ENCODE measurements at regions of chr11 and their contacts with region 1.

Region 1: DNA sequence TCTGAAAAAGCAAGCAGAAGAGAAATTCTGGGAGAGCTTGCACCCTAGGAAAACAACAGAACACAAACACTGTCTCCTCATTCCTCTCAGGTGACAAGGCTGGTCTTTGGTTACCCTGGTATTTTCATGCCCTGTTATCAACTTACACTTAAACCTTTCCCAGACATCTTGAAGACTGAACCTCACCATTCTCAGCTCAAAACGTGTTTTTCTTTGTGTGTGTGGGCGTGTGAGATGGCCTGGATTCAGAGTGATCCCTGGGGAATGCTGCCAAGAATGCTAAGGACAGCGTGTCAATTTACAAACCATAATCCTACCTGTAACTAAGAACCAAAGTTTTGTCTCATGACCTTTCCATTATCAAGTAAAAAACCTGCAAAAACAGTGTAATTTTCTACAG is 33.3 kb downstream of the ELF5 start:
- DNase-seq: no peak
- ATAC-seq: no peak
- H3K4me3 ChIP-seq: no peak overlapping the region
- H3K27ac ChIP-seq: no peak overlapping the region
- H3K4me1 ChIP-seq: peaks cover 9 to 10% of the 10 kb centered on the region in 2 donors
- H3K27me3 ChIP-seq: no peaks in the 10 kb centered on the region
- CTCF ChIP-seq: no peak
- POLR2A ChIP-seq: no peak

Region 2: DNA sequence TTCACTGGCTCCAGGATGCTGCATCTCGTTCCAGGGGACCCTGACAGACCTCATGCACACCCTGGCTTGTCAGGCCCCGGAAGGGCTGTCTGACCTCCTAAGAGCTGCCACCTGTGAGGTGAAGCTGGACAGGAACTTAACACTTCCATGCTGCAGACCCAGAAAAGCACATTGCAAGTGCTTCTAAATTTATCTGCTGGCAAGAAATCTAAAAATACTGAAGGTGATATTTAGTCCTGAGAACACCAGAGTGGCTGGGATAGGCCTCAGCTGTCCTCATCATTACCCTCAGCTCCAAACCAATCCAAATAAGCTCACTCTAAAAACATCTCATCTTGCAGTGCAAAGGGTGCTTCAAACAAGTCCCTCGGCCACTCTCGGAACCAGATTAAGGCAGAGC is 169.2 kb before region 1 on chr11:
- in situ Hi-C with region 1: no loop called
- intact Hi-C with region 1: loop called (anchors 2 kb)
- DNase-seq: peak; percentile 26 to 74
- ATAC-seq: peak; percentile 88 to 89
- H3K4me3 ChIP-seq: no peak overlapping the region
- H3K27ac ChIP-seq: peak overlapping the region; percentile 80 to 88 (median 84)
- H3K4me1 ChIP-seq: peaks cover 50 to 69% of the 10 kb centered on the region in 2 donors
- H3K27me3 ChIP-seq: no peaks in the 10 kb centered on the region
- CTCF ChIP-seq: no peak
- POLR2A ChIP-seq: peak in 1 of 2 donors; percentile 54

Region 3: GRCh38 chr11:34379079-34379478 is 101.2 kb before region 1 on chr11:
- in situ Hi-C with region 1: loop called in 1 of 4 experiments (anchors 10 kb)
- intact Hi-C with region 1: no loop called
- DNase-seq: no peak
- ATAC-seq: no peak
- H3K4me3 ChIP-seq: no peak overlapping the region
- H3K27ac ChIP-seq: no peak overlapping the region
- H3K4me1 ChIP-seq: no peaks in the 10 kb centered on the region
- H3K27me3 ChIP-seq: no peaks in the 10 kb centered on the region
- CTCF ChIP-seq: no peak
- POLR2A ChIP-seq: no peak

Region 4: DNA sequence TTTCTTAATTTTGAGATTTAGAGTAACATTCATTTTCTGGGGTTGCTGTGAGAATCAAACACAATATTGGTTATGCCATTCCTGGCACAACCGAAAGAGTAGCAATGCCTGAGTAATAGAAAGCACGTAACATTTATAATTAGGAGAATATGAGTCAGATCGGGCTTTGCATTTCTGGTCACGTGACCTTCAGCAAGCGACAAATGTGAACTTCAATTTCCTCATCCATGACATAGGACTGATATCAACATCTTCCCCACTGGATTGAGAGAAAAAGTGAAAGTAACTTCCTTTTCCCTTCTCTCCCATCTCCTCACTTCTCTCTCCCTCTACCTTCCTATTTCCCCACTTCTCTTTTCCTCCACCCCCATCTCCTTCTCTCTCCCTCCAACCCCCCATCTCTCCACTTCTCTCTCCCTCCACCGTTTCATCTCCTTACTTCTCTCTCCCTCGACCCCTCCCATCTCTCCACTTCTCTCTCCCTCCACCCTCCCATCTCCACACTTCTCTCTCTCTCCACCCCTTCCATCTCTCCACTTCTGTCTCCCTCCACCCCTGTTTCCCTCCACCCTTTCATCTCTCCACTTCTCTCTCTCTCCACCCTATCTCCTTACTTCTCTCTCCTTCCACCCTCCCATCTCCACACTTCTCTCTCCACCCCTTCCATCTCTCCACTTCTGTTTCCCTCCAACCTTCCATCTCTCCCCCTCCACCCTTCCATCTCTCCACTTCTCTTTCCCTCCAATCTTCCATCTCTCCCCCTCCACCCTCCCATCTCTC is 75.0 kb before region 1 on chr11:
- in situ Hi-C with region 1: no loop called
- intact Hi-C with region 1: no loop called
- DNase-seq: no peak
- ATAC-seq: no peak
- H3K4me3 ChIP-seq: no peak overlapping the region
- H3K27ac ChIP-seq: no peak overlapping the region
- H3K4me1 ChIP-seq: no peaks in the 10 kb centered on the region
- H3K27me3 ChIP-seq: no peaks in the 10 kb centered on the region
- CTCF ChIP-seq: no peak
- POLR2A ChIP-seq: no peak